MCF 10A (cell line): ENCODE measurements at regions of chr1 and their contacts with region 1.

Region 1: GRCh38 chr1:216902669-216903381 is 179.6 kb upstream of the ESRRG start:
- DNase-seq: peak; percentile 86
- H3K4me3 Mint-ChIP-seq: no peak overlapping the region
- H3K27ac Mint-ChIP-seq: peak overlapping the region; percentile 66
- H3K4me1 Mint-ChIP-seq: peaks cover 52% of the 10 kb centered on the region
- H3K27me3 Mint-ChIP-seq: no peaks in the 10 kb centered on the region
- CTCF ChIP-seq: no peak

Region 2: DNA sequence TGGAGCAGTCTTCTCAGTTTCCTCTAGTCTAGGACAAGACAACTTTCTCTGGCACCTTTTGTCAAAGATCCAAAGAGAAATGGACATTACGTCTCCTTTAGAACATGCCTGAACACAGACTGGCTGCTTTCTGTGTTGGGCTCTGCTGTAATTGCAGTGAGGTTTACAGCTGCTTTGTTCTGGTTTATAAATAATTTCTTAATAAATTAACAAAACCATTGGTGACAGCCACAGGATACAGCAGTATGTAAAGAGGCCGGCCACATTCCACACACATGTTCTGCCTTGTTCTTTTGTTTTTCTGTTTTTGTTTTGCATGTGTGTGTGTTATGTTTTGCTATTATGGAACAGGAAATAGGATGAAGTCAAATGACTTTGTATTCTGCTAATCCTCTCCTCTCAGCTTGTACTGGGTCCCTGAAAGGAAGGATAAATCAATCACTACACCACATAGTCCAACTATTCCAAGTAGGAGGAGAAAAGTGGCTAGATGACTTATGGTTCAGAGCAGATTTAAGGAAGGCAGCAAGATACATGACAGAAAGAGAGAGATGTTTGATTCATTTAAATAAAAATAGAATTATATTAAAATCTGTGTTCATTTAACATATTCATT is 18.1 kb before region 1 on chr1:
- CTCF ChIA-PET with region 1: interaction called, 4 read pairs
- POLR2A ChIA-PET with region 1: interaction called, 17 read pairs
- intact Hi-C with region 1: no loop called
- DNase-seq: no peak
- H3K4me3 Mint-ChIP-seq: no peak overlapping the region
- H3K27ac Mint-ChIP-seq: peak overlapping the region; percentile 33
- H3K4me1 Mint-ChIP-seq: peaks cover 12% of the 10 kb centered on the region
- H3K27me3 Mint-ChIP-seq: no peaks in the 10 kb centered on the region
- CTCF ChIP-seq: no peak

Region 3: GRCh38 chr1:216929870-216930582 is 27.2 kb after region 1 on chr1:
- CTCF ChIA-PET with region 1: interaction called, 3 read pairs
- POLR2A ChIA-PET with region 1: interaction called, 3 read pairs
- intact Hi-C with region 1: loop called (anchors 2 kb)
- DNase-seq: peak; percentile 72
- H3K4me3 Mint-ChIP-seq: no peak overlapping the region
- H3K27ac Mint-ChIP-seq: no peak overlapping the region
- H3K4me1 Mint-ChIP-seq: no peaks in the 10 kb centered on the region
- H3K27me3 Mint-ChIP-seq: no peaks in the 10 kb centered on the region
- CTCF ChIP-seq: no peak